ENCODE measurements at regions of chr20 and their contacts with region 1.

Region 1: GRCh38 chr20:50278674-50279531 is 88.3 kb downstream of the CEBPB start:
- DNase-seq: peak; percentile 70 to 86 (median 77)
- ATAC-seq: peak; percentile 90
- H3K4me3 ChIP-seq: no peak overlapping the region
- H3K27ac ChIP-seq: no peak overlapping the region; the same call in 2 of the 3 replicates
- H3K4me1 ChIP-seq: peaks cover 41 to 56% of the 10 kb centered on the region in 2 experiments
- H3K27me3 ChIP-seq: no peaks in the 10 kb centered on the region; a peak in 1 of 5 replicates
- CTCF ChIP-seq: peak; percentile 70 to 78 (median 71)
- EP300 ChIP-seq: peak; percentile 43
- POLR2A ChIP-seq: no peak
- RAD21 ChIP-seq: peak; percentile 75 to 79

Region 2: GRCh38 chr20:50301712-50302111 is 22.8 kb after region 1 on chr20:
- CTCF ChIA-PET with region 1: no interaction called
- POLR2A ChIA-PET with region 1: no interaction called
- in situ Hi-C with region 1: no loop called
- intact Hi-C with region 1: no loop called
- DNase-seq: no peak
- ATAC-seq: no peak
- H3K4me3 ChIP-seq: no peak overlapping the region
- H3K27ac ChIP-seq: no peak overlapping the region
- H3K4me1 ChIP-seq: peaks cover 45 to 52% of the 10 kb centered on the region in 2 experiments
- H3K27me3 ChIP-seq: no peaks in the 10 kb centered on the region
- CTCF ChIP-seq: no peak
- EP300 ChIP-seq: no peak
- POLR2A ChIP-seq: no peak
- RAD21 ChIP-seq: no peak

Region 3: GRCh38 chr20:50346372-50347283 is 67.7 kb after region 1 on chr20:
- CTCF ChIA-PET with region 1: no interaction called
- POLR2A ChIA-PET with region 1: no interaction called
- in situ Hi-C with region 1: no loop called
- intact Hi-C with region 1: loop called (anchors 2 kb)
- DNase-seq: no peak
- ATAC-seq: no peak
- H3K4me3 ChIP-seq: no peak overlapping the region
- H3K27ac ChIP-seq: no peak overlapping the region
- H3K4me1 ChIP-seq: peaks cover 25 to 28% of the 10 kb centered on the region in 2 experiments
- H3K27me3 ChIP-seq: no peaks in the 10 kb centered on the region
- CTCF ChIP-seq: no peak
- EP300 ChIP-seq: no peak
- POLR2A ChIP-seq: no peak
- RAD21 ChIP-seq: no peak

Region 4: DNA sequence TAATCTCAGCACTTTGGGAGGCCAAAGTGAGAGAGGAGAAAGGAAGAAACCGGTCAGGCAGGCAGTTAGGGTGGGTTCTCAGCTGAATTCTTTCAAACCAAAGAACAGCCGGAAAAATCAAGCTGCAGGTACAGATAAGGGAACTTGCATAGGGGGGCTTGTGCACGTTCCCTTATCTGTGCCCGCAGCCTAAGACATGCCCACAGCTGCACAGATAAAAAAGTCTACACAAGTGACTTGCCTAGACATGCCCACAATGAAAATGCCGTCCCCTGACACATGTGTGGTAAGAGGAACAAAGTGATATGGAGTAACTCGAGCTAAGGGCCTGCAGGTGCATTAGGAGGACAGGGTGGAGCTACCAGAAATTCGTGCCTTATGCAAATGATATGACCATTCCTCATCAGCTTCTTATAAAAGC is 1699.2 kb after region 1 on chr20:
- CTCF ChIA-PET with region 1: no interaction called
- POLR2A ChIA-PET with region 1: no interaction called
- in situ Hi-C with region 1: no loop called
- intact Hi-C with region 1: no loop called
- DNase-seq: no peak
- ATAC-seq: no peak
- H3K4me3 ChIP-seq: no peak overlapping the region
- H3K27ac ChIP-seq: no peak overlapping the region
- H3K4me1 ChIP-seq: no peaks in the 10 kb centered on the region
- H3K27me3 ChIP-seq: no peaks in the 10 kb centered on the region; a peak in 1 of 5 replicates
- CTCF ChIP-seq: no peak
- EP300 ChIP-seq: no peak
- POLR2A ChIP-seq: no peak
- RAD21 ChIP-seq: no peak